ENCODE measurements at regions of chr3 and their contacts with region 1.

Region 1: GRCh38 chr3:56915966-56916586 is 114.3 kb upstream of the ARHGEF3 start:
- DNase-seq: peak; percentile 44 to 88 (median 75)
- ATAC-seq: peak; percentile 89
- H3K4me3 ChIP-seq: peak overlapping the region; percentile 75 to 78
- H3K4me3 Mint-ChIP-seq: peak overlapping the region; percentile 92
- H3K27ac ChIP-seq: peak overlapping the region; percentile 72 to 88
- H3K27ac Mint-ChIP-seq: peak overlapping the region; percentile 91
- H3K4me1 ChIP-seq: peaks cover 57% of the 10 kb centered on the region
- H3K4me1 Mint-ChIP-seq: peaks cover 77% of the 10 kb centered on the region
- H3K27me3 ChIP-seq: no peaks in the 10 kb centered on the region
- H3K27me3 Mint-ChIP-seq: no peaks in the 10 kb centered on the region
- CTCF ChIP-seq: no peak

Region 2: DNA sequence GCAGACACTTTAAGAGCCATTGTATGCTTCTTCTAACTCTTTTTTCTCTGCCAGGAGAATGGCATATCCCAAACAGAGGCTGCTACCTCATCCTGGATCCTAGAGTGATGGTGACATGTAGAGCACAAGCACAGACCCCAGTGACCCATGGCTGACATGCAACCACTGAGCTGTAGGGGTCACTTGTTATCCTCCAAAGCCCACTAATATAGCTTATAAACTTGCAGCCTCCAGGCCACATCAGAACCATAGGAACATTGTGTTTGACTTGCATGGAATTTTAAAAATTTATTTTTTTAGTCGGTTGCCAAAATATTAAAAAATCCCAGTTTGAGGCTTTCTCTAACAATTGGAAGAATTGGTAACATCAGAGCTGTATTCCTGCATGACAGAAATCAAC is 1146.0 kb before region 1 on chr3:
- CTCF ChIA-PET with region 1: no interaction called
- POLR2A ChIA-PET with region 1: no interaction called
- intact Hi-C with region 1: no loop called
- DNase-seq: no peak
- ATAC-seq: no peak
- H3K4me3 ChIP-seq: no peak overlapping the region
- H3K4me3 Mint-ChIP-seq: no peak overlapping the region
- H3K27ac ChIP-seq: no peak overlapping the region
- H3K27ac Mint-ChIP-seq: no peak overlapping the region
- H3K4me1 ChIP-seq: no peaks in the 10 kb centered on the region
- H3K4me1 Mint-ChIP-seq: no peaks in the 10 kb centered on the region
- H3K27me3 ChIP-seq: no peaks in the 10 kb centered on the region
- H3K27me3 Mint-ChIP-seq: no peaks in the 10 kb centered on the region
- CTCF ChIP-seq: no peak

Region 3: GRCh38 chr3:56556908-56557830 is 358.9 kb before region 1 on chr3 and contains the start of gene CCDC66:
- CTCF ChIA-PET with region 1: no interaction called
- POLR2A ChIA-PET with region 1: no interaction called
- intact Hi-C with region 1: loop called in 1 of 2 experiments (anchors 10 kb)
- DNase-seq: peak; percentile 88 to 96 (median 94)
- ATAC-seq: peak; percentile 89
- H3K4me3 ChIP-seq: peak within 1 kb of the TSS; percentile 70 to 78
- H3K4me3 Mint-ChIP-seq: peak within 1 kb of the TSS; percentile 100
- H3K27ac ChIP-seq: peak within 1 kb of the TSS; percentile 91 to 93
- H3K27ac Mint-ChIP-seq: peak within 1 kb of the TSS; percentile 100
- H3K4me1 ChIP-seq: peaks cover 22% of the 10 kb centered on the region
- H3K4me1 Mint-ChIP-seq: peaks cover 32% of the 10 kb centered on the region
- H3K27me3 ChIP-seq: no peaks in the 10 kb centered on the region
- H3K27me3 Mint-ChIP-seq: no peaks in the 10 kb centered on the region
- CTCF ChIP-seq: peak; percentile 83
- total RNA-seq, gene CCDC66: 63.9 to 65.4 TPM

Region 4: GRCh38 chr3:56693750-56694149 is 222.3 kb before region 1 on chr3:
- CTCF ChIA-PET with region 1: no interaction called
- POLR2A ChIA-PET with region 1: interaction called, 3 read pairs
- intact Hi-C with region 1: loop called in 1 of 2 experiments (anchors 5 kb)
- DNase-seq: peak in 1 of 9 experiments; percentile 38
- ATAC-seq: no peak
- H3K4me3 ChIP-seq: no peak overlapping the region
- H3K4me3 Mint-ChIP-seq: peak overlapping the region; percentile 80
- H3K27ac ChIP-seq: peak overlapping the region in 1 of 2 experiments; percentile 60
- H3K27ac Mint-ChIP-seq: peak overlapping the region; percentile 89
- H3K4me1 ChIP-seq: peaks cover 35% of the 10 kb centered on the region
- H3K4me1 Mint-ChIP-seq: peaks cover 46% of the 10 kb centered on the region
- H3K27me3 ChIP-seq: no peaks in the 10 kb centered on the region
- H3K27me3 Mint-ChIP-seq: no peaks in the 10 kb centered on the region
- CTCF ChIP-seq: no peak

Region 5: DNA sequence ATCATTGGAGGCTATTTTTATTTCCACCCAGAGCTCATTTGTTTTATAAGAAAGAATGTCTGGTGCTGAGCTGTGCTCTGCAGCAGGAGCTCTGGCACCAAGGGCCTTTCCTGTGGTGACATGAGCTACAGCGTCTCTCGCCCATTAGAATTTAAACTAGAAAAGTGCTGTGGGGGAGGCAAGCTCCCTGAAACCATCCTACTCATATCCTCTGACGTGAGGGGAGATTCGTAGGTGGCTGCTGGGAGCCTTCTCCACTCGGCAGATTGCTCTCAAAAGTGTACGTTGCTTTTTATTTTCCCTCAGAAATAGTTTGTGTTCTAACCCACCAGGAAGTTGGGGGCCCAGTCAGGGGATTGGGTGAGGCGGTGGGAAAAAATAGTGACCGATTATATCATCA is 38.0 kb before region 1 on chr3:
- CTCF ChIA-PET with region 1: no interaction called
- POLR2A ChIA-PET with region 1: interaction called, 11 read pairs
- intact Hi-C with region 1: loop called (anchors 5 kb)
- DNase-seq: peak in 5 of 9 experiments; percentile 32 to 69 (median 43)
- ATAC-seq: peak; percentile 95
- H3K4me3 ChIP-seq: no peak overlapping the region
- H3K4me3 Mint-ChIP-seq: peak overlapping the region; percentile 61
- H3K27ac ChIP-seq: peak overlapping the region; percentile 4 to 13
- H3K27ac Mint-ChIP-seq: peak overlapping the region; percentile 89
- H3K4me1 ChIP-seq: peaks cover 43% of the 10 kb centered on the region
- H3K4me1 Mint-ChIP-seq: peaks cover 65% of the 10 kb centered on the region
- H3K27me3 ChIP-seq: no peaks in the 10 kb centered on the region
- H3K27me3 Mint-ChIP-seq: no peaks in the 10 kb centered on the region
- CTCF ChIP-seq: no peak

Region 6: DNA sequence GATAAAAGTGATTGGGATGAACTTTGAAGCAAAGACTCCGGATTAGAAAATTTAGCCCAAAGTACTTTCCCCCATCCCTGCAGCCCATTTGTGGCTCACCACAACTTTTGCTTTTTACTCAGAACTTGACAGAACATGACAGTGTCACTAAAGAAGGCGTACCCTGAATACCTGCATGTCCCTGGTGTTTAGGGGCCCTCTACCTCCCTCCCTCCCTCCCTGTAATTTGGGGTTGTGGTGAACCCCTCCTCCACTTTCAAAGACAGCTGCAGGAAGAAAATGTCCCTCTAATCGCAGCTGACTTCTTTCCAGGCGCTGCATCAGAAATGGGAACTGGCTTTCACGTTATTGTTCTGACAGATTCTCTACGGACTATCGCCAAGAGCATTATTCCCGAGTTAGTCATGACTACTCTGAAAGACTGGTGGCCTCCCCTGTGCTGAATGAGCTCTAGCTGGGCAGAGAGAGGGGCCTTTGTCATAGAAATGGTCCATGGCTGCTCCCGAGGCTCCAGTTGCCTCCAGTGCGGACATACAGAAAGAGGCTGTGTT is 21.1 kb before region 1 on chr3:
- CTCF ChIA-PET with region 1: interaction called, 4 read pairs
- POLR2A ChIA-PET with region 1: interaction called, 7 read pairs
- intact Hi-C with region 1: loop called in 1 of 2 experiments (anchors 2 kb)
- DNase-seq: peak in 3 of 9 experiments; percentile 28 to 51 (median 31)
- ATAC-seq: peak; percentile 75
- H3K4me3 ChIP-seq: no peak overlapping the region
- H3K4me3 Mint-ChIP-seq: peak overlapping the region; percentile 62
- H3K27ac ChIP-seq: no peak overlapping the region
- H3K27ac Mint-ChIP-seq: peak overlapping the region; percentile 73
- H3K4me1 ChIP-seq: peaks cover 40% of the 10 kb centered on the region
- H3K4me1 Mint-ChIP-seq: peaks cover 73% of the 10 kb centered on the region
- H3K27me3 ChIP-seq: no peaks in the 10 kb centered on the region
- H3K27me3 Mint-ChIP-seq: no peaks in the 10 kb centered on the region
- CTCF ChIP-seq: no peak

Region 7: DNA sequence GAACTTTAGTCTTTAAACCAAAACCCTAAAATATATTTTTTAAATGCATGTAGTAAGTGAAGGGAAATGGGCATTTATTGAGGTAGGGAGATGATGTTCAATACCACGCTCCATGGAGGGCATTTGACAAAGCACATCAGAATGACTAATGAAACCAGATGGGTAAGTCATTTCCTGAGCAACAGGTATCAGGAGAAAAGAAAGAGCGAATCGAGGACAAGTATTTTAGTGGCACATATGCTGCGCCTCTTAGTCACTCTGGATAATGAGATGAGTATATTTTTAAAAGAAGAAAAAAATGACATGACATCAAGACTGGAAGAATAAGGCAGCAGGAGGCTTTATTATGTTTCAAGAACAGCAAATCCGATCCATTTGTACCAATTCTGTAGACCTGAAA is 14.6 kb after region 1 on chr3:
- CTCF ChIA-PET with region 1: interaction called, 40 read pairs
- POLR2A ChIA-PET with region 1: interaction called, 27 read pairs
- intact Hi-C with region 1: loop called in 1 of 2 experiments (anchors 2 kb)
- DNase-seq: no peak
- ATAC-seq: peak; percentile 47
- H3K4me3 ChIP-seq: no peak overlapping the region
- H3K4me3 Mint-ChIP-seq: no peak overlapping the region
- H3K27ac ChIP-seq: no peak overlapping the region
- H3K27ac Mint-ChIP-seq: no peak overlapping the region
- H3K4me1 ChIP-seq: peaks cover 37% of the 10 kb centered on the region
- H3K4me1 Mint-ChIP-seq: peaks cover 54% of the 10 kb centered on the region
- H3K27me3 ChIP-seq: no peaks in the 10 kb centered on the region
- H3K27me3 Mint-ChIP-seq: no peaks in the 10 kb centered on the region
- CTCF ChIP-seq: no peak

Region 8: DNA sequence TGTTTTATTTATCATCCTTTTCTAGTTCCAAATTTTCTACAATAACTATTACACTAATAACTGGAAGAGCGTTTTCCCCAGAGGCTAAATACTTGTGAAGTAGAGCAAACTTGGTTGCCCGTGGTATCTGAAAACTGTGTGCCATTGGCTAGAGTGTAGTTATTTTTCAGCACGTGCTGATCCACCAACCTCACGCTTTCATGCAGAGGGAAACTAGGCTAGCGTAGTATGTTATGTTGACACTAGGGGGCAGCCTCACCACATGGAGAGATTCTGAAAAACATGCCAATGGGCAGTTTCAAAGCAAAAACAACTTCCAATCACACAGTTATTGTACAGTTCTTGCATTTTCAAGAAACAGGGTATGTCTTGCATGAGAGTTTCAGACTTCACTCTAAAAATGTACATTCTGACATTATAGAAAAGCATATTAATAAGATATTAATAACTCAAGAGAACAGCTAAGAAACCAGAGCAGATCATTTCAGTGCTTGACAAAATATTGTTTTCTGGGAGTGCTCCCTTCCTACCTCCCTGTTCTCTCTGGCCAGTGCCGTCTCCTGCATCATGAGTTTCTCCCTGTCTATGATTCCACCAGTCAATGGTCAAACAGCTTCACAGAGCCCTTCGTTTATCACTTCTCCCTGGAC is 184.1 kb after region 1 on chr3:
- CTCF ChIA-PET with region 1: no interaction called
- POLR2A ChIA-PET with region 1: no interaction called
- intact Hi-C with region 1: no loop called
- DNase-seq: peak; percentile 12 to 68 (median 51)
- ATAC-seq: peak; percentile 59
- H3K4me3 ChIP-seq: no peak overlapping the region
- H3K4me3 Mint-ChIP-seq: no peak overlapping the region
- H3K27ac ChIP-seq: no peak overlapping the region
- H3K27ac Mint-ChIP-seq: no peak overlapping the region
- H3K4me1 ChIP-seq: no peaks in the 10 kb centered on the region
- H3K4me1 Mint-ChIP-seq: peaks cover 3% of the 10 kb centered on the region
- H3K27me3 ChIP-seq: no peaks in the 10 kb centered on the region
- H3K27me3 Mint-ChIP-seq: no peaks in the 10 kb centered on the region
- CTCF ChIP-seq: peak; percentile 91